OCI-LY7 (cell line): ENCODE measurements at regions of chr9 and their contacts with region 1.

Region 1: DNA sequence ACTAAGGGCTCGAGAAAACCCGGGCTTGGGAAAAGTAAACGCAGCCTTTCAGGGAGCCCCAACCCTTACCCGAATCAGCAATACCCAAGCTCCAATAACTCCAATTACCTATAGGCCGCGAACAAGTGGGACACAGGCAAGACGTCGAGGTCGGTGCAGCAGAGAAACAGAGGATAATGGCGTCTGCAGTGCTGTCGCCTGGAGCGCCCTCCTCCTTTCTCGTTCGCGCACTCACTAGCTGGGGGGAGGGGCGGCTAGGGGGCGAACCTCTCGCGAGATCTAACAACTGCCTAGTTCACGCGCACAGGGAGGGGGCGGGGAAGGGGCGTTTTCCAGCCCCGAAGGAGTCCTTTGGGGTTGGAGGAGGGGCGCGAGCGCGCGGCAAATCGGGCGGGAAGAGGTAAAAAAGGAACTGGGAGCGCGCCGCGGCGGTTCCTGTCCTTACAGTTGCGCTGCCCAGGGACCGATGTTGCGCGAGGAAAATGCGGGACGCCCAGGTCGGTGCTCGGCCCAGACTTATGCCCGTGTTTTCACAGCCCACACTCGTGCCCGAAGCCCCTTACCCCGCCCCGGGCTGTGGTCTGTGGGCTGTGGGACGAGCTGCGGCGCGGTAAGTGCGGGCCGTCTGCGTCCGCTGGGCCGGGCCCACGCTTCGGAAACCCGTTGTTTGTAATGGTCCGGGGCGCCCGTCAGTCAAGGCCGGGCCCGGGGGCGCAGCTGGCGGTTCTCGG is at the start of gene RMI1:
- DNase-seq: peak; percentile 99
- H3K4me3 ChIP-seq: peak within 1 kb of the TSS; percentile 82
- H3K27ac ChIP-seq: peak within 1 kb of the TSS; percentile 88
- H3K4me1 ChIP-seq: peaks cover 40% of the 10 kb centered on the region
- CTCF ChIP-seq: peak; percentile 45; the same call in 1 of the 2 replicates
- total RNA-seq, gene RMI1: 10.0 and 16.7 TPM in 2 replicates

Region 2: GRCh38 chr9:83707768-83708514 is 272.6 kb before region 1 on chr9 and contains the start of gene UBQLN1:
- CTCF ChIA-PET with region 1: no interaction called
- POLR2A ChIA-PET with region 1: interaction called, 4 read pairs
- intact Hi-C with region 1: loop called (anchors 1 kb)
- DNase-seq: peak; percentile 95
- H3K4me3 ChIP-seq: peak within 1 kb of the TSS; percentile 89
- H3K27ac ChIP-seq: peak within 1 kb of the TSS; percentile 85
- H3K4me1 ChIP-seq: peaks cover 37% of the 10 kb centered on the region
- CTCF ChIP-seq: no peak
- total RNA-seq, gene UBQLN1: 83.9 and 115 TPM in 2 replicates

Region 3: DNA sequence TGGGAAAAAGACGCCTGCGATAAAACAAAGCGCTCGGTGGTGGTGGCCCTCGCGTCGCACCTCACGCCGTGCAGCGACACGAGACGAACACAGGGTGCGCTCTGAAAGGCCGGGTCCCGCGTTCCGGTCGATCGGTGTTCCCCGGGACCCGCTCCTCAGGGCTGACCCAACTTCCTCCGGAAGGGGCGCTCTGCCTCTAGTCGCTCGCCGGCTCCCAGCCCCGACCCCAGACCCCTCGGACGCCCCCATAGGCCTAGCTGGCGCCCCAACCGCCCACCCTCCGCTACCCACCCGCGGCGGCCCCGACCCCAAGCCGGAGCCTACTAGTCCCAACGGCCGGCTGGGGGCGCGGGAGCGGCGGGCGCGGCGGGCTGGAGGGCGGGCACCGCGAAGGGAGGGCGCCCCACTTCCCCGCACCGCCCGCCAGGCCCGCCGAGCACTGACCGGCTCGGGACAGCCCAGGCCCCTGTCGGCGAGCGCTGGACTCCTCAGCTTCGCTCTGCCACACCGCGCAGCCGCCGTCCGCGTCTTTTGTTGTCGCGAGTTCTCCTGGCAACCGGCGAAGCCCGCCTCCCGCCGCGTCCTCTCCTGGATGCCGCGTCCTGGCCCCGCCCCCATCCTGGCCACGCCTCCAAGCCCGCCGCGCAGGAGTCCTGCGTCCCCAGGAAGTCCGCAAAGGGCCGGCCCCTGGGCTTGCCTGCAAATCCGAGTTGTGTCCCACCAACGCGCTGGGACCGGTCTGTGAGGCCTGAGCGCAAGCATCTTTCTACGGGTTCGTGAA is 59.4 kb before region 1 on chr9 and contains the start of gene KIF27:
- CTCF ChIA-PET with region 1: no interaction called
- POLR2A ChIA-PET with region 1: interaction called, 5 read pairs
- intact Hi-C with region 1: loop called (anchors 1 kb)
- DNase-seq: peak; percentile 95
- H3K4me3 ChIP-seq: peak within 1 kb of the TSS; percentile 80
- H3K27ac ChIP-seq: peak within 1 kb of the TSS; percentile 68
- H3K4me1 ChIP-seq: peaks cover 22% of the 10 kb centered on the region
- CTCF ChIP-seq: peak; percentile 70
- total RNA-seq, gene KIF27: 5.6 and 6.0 TPM in 2 replicates

Region 4: GRCh38 chr9:85741875-85742629 is 1761.5 kb after region 1 on chr9 and contains the start of gene AGTPBP1:
- CTCF ChIA-PET with region 1: no interaction called
- POLR2A ChIA-PET with region 1: no interaction called
- intact Hi-C with region 1: loop called (anchors 5 kb)
- DNase-seq: peak; percentile 97
- H3K4me3 ChIP-seq: peak within 1 kb of the TSS; percentile 92
- H3K27ac ChIP-seq: peak within 1 kb of the TSS; percentile 70
- H3K4me1 ChIP-seq: peaks cover 10% of the 10 kb centered on the region
- CTCF ChIP-seq: no peak
- total RNA-seq, gene AGTPBP1: 24.2 and 31.0 TPM in 2 replicates